Sigmoid colon (tissue), 7 donors: ENCODE measurements at regions of chr7 and their contacts with region 1.

Region 1: DNA sequence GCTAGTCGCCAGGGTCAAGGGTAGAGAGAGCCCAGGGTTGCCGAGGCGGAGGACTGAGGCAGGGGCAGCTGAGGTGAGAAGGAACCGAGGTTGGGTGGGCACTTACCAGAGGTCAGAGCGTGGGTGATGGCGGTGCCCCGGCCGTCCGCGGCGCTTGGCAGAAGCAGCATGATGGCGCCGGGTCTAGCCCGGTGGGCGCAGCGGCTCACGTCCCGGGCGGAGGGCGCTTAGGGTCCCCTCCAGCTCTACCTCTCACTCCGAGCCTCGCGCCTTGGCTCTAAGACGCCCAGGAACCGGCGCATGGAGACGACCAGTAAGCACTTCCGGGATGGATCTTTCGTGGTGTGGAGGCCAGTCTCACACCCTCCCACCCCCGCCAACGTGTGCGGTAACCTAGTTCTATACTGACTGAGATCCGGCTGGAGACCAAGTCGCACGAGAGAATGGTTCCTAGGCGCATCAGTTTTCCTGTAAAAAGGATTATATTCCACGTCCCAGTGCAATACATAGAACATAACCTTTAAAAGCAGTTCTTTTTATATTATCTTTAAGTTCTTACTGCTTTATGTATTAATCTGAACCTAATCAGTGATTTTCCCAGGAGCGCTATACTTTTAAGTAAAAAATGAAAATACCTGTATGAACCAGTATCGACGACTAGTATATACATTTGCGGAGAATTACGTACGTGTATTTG is at the start of gene DNAJC2:
- DNase-seq: peak; percentile 94
- H3K4me3 ChIP-seq: peak within 1 kb of the TSS; percentile 68 to 92 (median 76)
- H3K27ac ChIP-seq: peak within 1 kb of the TSS; percentile 82 to 86 (median 84)
- H3K4me1 ChIP-seq: peaks cover 0 to 45% (median 39%) of the 10 kb centered on the region in 4 donors
- H3K27me3 ChIP-seq: no peaks in the 10 kb centered on the region
- CTCF ChIP-seq: no peak
- EP300 ChIP-seq: no peak
- POLR2A ChIP-seq: peak in 1 of 2 donors; percentile 26
- total RNA-seq, gene DNAJC2: 10.7 to 21.9 (median 18.7) TPM

Region 2: DNA sequence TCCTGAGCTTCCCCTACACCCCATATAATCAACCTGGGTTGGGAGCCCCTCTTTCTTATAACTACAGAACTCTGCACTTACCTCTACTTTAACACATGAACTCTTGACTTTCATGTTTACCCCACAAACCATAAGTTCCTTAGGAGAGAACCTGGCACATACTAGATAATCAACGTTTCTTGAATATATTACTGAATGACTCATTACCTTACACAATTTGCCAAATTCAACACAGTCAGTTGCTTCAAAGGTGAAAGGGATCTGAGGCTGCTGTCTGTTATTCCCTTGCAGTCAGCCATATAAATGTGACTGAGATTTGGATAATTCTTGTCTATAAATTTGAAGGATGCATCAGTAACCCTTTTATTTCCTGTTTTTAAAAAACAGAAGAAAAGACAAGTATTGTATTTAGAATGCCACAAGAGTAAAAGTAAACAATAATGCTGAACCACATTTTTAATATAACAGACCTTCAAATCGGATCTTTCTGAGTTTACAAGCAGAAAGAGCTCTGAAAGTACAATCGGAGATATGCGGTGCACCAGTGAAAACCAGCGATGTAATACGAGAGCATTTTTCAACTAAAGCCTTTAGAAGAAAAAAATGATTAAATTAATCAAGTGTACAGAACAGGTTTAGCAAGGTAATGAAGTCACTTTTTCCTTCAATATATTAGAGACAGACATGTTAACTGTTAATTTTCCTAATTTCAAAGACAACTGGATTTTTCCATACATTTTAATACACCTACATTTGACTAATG is 461.3 kb before region 1 on chr7:
- intact Hi-C with region 1: no loop called
- DNase-seq: no peak
- H3K4me3 ChIP-seq: no peak overlapping the region
- H3K27ac ChIP-seq: no peak overlapping the region
- H3K4me1 ChIP-seq: no peaks in the 10 kb centered on the region
- H3K27me3 ChIP-seq: no peaks in the 10 kb centered on the region
- CTCF ChIP-seq: no peak
- EP300 ChIP-seq: no peak
- POLR2A ChIP-seq: no peak

Region 3: GRCh38 chr7:103074519-103075336 is 269.9 kb before region 1 on chr7 and contains the starts of genes ARMC10 and FBXL13:
- intact Hi-C with region 1: loop called (anchors 10 kb)
- DNase-seq: peak; percentile 95
- H3K4me3 ChIP-seq: peak within 1 kb of the TSS; percentile 68 to 81 (median 74)
- H3K27ac ChIP-seq: peak within 1 kb of the TSS; percentile 90 to 93 (median 93)
- H3K4me1 ChIP-seq: peaks cover 0 to 24% (median 21%) of the 10 kb centered on the region in 4 donors
- H3K27me3 ChIP-seq: no peaks in the 10 kb centered on the region
- CTCF ChIP-seq: peak in 3 of 4 experiments; percentile 12 to 24 (median 16)
- EP300 ChIP-seq: no peak
- POLR2A ChIP-seq: no peak
- total RNA-seq, gene ARMC10: 41.5 to 49.0 (median 46.5) TPM
- total RNA-seq, gene FBXL13: 2.1 to 3.3 (median 2.5) TPM

Region 4: DNA sequence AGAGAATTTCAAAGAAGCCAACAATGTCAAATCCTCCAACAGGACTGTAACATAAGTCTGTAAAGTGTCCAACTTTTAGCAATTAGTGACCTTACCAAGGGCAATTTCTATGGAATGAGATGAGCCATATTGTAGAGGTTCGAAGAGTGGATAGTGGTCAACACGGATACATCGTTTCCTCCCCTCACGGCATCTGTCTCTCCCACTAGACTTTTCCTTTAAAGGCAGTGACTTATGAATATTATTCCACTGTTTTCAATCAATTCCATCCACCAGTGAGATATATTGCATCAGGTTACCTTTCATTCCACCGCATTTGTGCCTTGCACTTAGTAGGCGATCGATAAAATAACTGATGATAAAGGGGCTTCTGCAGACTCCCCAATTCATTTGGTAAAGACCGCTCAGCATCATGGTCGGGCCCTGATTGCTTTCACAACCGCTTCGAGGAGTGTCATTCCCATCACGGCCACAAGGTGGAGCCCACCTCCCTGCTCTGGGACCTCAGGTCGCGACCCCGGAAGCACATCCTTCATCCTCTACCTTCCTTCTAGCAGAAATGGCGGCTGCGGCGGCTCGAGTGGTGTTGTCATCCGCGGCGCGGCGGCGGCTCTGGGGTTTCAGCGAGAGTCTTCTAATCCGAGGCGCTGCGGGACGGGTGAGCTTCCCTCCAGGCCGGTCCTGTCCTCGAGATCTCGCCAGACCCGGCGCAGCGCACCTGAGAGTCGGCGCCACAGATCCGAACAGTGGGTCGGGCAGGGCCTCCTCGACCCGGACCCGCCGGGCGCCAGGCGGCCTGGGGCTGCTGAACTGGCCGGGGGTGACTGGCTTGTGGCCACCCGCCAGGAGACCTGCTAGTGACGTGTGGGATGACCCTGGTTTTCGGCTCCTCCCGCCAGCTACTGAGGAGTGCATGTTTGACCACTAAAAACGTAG is 47.4 kb before region 1 on chr7 and contains the start of gene PMPCB:
- intact Hi-C with region 1: loop called (anchors 2 kb)
- DNase-seq: peak; percentile 97
- H3K4me3 ChIP-seq: peak within 1 kb of the TSS; percentile 71 to 83 (median 77)
- H3K27ac ChIP-seq: peak within 1 kb of the TSS; percentile 75 to 84 (median 78)
- H3K4me1 ChIP-seq: peaks cover 0 to 26% (median 15%) of the 10 kb centered on the region in 4 donors
- H3K27me3 ChIP-seq: no peaks in the 10 kb centered on the region
- CTCF ChIP-seq: peak; percentile 89 to 97 (median 94)
- EP300 ChIP-seq: no peak
- POLR2A ChIP-seq: no peak
- total RNA-seq, gene PMPCB: 53.5 to 72.3 (median 60.5) TPM